Activated CD4-positive, alpha-beta T cell treated with anti-CD3 and anti-CD28 coated beads for 36 hours (primary cell): ENCODE measurements at regions of chr5 and their contacts with region 1.

Region 1: GRCh38 chr5:143403593-143404415 is at the start of gene NR3C1:
- DNase-seq: peak; percentile 89
- ATAC-seq: peak; percentile 58
- H3K4me3 Mint-ChIP-seq: peak within 1 kb of the TSS; percentile 91
- H3K27ac Mint-ChIP-seq: peak within 1 kb of the TSS; percentile 97
- H3K4me1 Mint-ChIP-seq: peaks cover 41% of the 10 kb centered on the region
- H3K27me3 Mint-ChIP-seq: no peaks in the 10 kb centered on the region
- total RNA-seq, gene NR3C1: 47.1 to 53.9 TPM

Region 2: DNA sequence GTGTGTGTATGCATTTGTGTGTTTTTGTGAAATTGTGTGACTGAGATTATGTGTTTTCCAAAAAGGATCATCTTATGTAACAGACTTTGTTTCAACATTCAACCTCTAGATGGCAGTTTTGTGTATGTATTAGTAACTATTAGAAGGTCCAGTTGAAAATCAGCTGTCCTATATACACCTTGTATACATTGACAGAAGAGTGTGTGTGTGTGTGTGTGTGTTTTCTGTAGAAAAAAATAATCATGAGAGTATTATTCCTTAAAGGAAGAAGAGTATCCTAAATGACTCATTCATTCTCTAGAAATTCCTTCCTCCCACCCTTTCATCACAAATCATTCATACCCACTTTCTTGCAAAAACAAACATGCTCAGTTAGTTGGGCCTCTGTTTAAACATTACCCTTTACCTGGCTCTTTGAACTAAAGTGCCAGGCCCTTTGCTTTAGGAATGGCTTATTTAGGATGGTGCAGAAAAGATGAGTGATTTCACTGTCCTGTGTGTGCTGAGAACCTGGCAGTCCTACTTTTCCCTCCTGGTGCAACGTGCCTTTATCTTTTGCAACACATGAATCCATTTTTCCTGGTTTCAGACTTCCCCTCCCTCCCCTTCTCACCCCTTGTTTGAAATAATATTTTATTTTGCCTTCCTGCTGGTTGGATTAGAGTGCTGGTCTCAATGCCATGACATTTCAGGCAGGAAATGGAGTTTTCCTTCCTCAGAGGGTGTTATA is 481.4 kb before region 1 on chr5:
- CTCF ChIA-PET with region 1: no interaction called
- POLR2A ChIA-PET with region 1: no interaction called
- intact Hi-C with region 1: loop called in 1 of 2 experiments (anchors 5 kb)
- DNase-seq: no peak
- ATAC-seq: no peak
- H3K4me3 Mint-ChIP-seq: no peak overlapping the region
- H3K27ac Mint-ChIP-seq: no peak overlapping the region
- H3K4me1 Mint-ChIP-seq: peaks cover 23% of the 10 kb centered on the region
- H3K27me3 Mint-ChIP-seq: no peaks in the 10 kb centered on the region

Region 3: DNA sequence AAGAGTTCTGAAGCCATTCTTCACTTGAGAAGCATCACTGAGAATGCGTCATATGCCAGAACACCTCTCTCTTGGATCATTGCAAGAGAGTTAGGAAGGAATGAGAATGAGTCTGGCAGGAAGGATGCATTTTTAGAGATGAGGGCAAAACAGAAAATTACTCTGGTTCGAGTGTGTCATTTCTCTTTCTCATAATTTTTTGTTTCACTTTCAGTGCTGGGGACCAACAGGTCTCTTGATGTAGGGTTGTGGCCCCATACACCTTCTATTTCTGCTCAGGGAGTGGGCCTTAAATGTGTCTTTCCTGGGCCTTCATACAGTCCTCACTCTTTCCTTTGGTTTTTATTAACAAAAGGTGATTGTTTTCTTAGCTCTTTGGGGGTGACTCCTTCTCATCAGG is 302.7 kb before region 1 on chr5:
- CTCF ChIA-PET with region 1: no interaction called
- POLR2A ChIA-PET with region 1: no interaction called
- intact Hi-C with region 1: loop called in 1 of 2 experiments (anchors 2 kb)
- DNase-seq: no peak
- ATAC-seq: peak; percentile 81
- H3K4me3 Mint-ChIP-seq: peak overlapping the region; percentile 7
- H3K27ac Mint-ChIP-seq: peak overlapping the region; percentile 68
- H3K4me1 Mint-ChIP-seq: peaks cover 31% of the 10 kb centered on the region
- H3K27me3 Mint-ChIP-seq: no peaks in the 10 kb centered on the region

Region 4: GRCh38 chr5:143229896-143230675 is 173.7 kb before region 1 on chr5:
- CTCF ChIA-PET with region 1: no interaction called
- POLR2A ChIA-PET with region 1: no interaction called
- intact Hi-C with region 1: loop called in 1 of 2 experiments (anchors 2 kb)
- DNase-seq: peak; percentile 74
- ATAC-seq: peak; percentile 91
- H3K4me3 Mint-ChIP-seq: peak overlapping the region; percentile 35
- H3K27ac Mint-ChIP-seq: peak overlapping the region; percentile 86
- H3K4me1 Mint-ChIP-seq: peaks cover 26% of the 10 kb centered on the region
- H3K27me3 Mint-ChIP-seq: no peaks in the 10 kb centered on the region

Region 5: DNA sequence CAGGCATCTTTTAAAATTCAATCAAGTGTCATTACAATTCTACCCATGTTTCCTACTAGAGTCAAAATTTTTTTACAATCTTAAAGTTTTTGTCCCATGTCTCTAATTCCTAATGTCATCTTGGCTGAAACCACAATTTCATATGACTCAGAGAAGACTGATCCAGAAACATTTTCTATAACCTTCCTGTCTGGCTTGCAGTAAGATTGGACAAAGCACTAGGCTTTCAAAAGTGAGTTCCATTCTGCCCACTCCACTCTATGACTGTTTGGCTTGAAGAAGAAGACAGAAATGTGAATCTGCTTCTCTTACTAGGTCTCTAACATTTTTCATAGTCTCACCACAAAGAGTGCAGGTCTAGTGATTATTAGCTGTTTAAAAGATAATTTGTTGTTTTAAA is 89.1 kb before region 1 on chr5:
- CTCF ChIA-PET with region 1: no interaction called
- POLR2A ChIA-PET with region 1: no interaction called
- intact Hi-C with region 1: no loop called
- DNase-seq: no peak
- ATAC-seq: no peak
- H3K4me3 Mint-ChIP-seq: no peak overlapping the region
- H3K27ac Mint-ChIP-seq: no peak overlapping the region
- H3K4me1 Mint-ChIP-seq: peaks cover 61% of the 10 kb centered on the region
- H3K27me3 Mint-ChIP-seq: no peaks in the 10 kb centered on the region

Region 6: DNA sequence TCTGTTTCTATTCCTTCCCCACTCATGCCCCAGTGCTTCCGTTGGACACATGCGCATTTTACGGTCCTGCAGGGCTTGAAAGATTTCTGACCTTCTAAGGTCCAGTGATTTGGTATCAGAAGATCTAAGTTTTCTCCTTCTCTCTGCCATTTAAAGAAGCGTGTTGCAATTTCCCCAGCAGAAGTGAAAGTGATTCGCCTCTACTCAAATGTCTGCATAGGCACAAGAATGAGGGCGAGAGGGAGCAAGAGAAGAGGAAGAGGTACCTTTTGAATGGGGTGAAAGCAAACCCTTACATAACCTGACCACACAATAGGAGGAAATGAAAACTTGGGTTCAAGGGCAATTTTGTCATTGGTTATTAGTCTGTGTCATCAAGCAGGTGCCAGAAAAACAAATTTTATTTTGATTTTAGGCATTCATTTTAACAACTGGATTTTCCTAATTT is 31.4 kb after region 1 on chr5:
- CTCF ChIA-PET with region 1: interaction called, 14 read pairs
- POLR2A ChIA-PET with region 1: interaction called, 14 read pairs
- intact Hi-C with region 1: loop called (anchors 1 kb)
- DNase-seq: peak; percentile 47
- ATAC-seq: peak; percentile 39
- H3K4me3 Mint-ChIP-seq: peak overlapping the region; percentile 76
- H3K27ac Mint-ChIP-seq: peak overlapping the region; percentile 98
- H3K4me1 Mint-ChIP-seq: peaks cover 69% of the 10 kb centered on the region
- H3K27me3 Mint-ChIP-seq: no peaks in the 10 kb centered on the region

Region 7: DNA sequence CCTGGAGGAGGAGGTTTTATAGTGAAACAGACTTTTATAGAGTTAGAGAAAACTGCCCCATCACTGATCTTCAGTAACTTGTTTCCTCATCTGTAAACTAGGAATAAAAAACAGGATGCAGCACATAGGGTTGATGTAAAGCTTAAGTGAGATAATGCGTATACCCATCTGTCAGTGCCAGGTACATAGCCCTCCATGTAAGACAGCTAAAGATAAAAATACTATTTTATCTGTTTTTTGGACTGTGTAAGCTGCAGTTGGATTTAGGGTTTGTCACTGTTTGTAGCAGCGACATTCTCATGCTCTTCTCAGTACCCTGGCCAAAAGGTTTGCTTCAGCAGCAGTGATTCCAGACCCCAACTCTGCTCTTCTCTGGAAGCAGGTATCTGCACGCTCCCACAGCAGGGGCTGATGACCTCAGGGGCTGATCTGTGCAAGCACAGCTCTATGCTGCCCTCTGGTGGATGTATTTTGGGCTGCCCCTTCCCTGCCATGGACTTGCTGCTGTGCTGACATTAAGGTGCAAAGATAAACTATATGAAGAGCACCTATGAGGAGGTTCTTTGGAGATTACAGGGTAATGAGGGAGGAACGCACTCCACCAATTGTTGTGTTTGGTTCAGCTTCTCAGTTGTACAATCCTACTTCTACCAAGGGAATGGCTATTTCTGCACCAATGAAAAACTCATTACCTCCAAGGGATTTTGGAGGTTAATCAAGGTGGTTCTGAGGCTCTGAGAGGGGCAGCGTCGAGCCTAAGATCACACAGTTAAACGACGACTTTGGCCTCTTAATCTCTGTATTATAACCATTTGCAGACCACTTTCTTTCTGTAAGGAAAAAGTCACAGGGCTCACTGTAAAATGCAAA is 421.3 kb after region 1 on chr5:
- CTCF ChIA-PET with region 1: interaction called, 6 read pairs
- POLR2A ChIA-PET with region 1: no interaction called
- intact Hi-C with region 1: loop called (anchors 1 to 5 kb)
- DNase-seq: peak; percentile 91
- ATAC-seq: peak; percentile 70
- H3K4me3 Mint-ChIP-seq: no peak overlapping the region
- H3K27ac Mint-ChIP-seq: no peak overlapping the region
- H3K4me1 Mint-ChIP-seq: peaks cover 18% of the 10 kb centered on the region
- H3K27me3 Mint-ChIP-seq: peaks cover 2% of the 10 kb centered on the region

Region 8: DNA sequence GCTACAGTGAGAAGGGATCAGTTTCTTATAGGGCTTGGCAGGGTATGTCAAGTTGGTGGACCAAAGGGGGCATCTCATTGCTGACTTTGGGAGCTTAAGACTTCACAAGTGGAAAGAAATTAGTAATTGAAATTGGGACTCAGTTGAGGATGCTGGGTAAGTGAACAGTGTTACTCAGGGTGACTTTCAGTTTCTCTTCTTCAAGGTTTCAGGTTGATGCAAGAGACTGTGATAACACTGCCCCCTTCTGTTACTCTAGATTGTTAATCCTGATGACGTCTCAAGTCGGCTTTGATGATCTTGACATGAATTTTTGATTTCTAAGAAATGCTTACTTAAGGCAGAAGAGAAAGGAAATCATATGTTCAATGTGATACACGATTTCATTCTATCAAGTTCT is 788.2 kb after region 1 on chr5:
- CTCF ChIA-PET with region 1: interaction called, 4 read pairs
- POLR2A ChIA-PET with region 1: no interaction called
- intact Hi-C with region 1: loop called (anchors 2 to 10 kb)
- DNase-seq: peak; percentile 19
- ATAC-seq: peak; percentile 74
- H3K4me3 Mint-ChIP-seq: no peak overlapping the region
- H3K27ac Mint-ChIP-seq: no peak overlapping the region
- H3K4me1 Mint-ChIP-seq: peaks cover 22% of the 10 kb centered on the region
- H3K27me3 Mint-ChIP-seq: no peaks in the 10 kb centered on the region